ENCODE measurements at regions of chr10 and their contacts with region 1.

Region 1: GRCh38 chr10:70146489-70147258 is at the start of gene TYSND1:
- DNase-seq: peak; percentile 99
- H3K4me3 Mint-ChIP-seq: peak within 1 kb of the TSS; percentile 80
- H3K27ac Mint-ChIP-seq: peak within 1 kb of the TSS; percentile 87
- H3K4me1 Mint-ChIP-seq: peaks cover 14% of the 10 kb centered on the region
- H3K27me3 Mint-ChIP-seq: no peaks in the 10 kb centered on the region
- CTCF ChIP-seq: peak; percentile 65
- total RNA-seq, gene TYSND1: 14.6 and 16.5 TPM in 2 replicates

Region 2: GRCh38 chr10:70093335-70093944 is 53.2 kb before region 1 on chr10:
- CTCF ChIA-PET with region 1: no interaction called
- POLR2A ChIA-PET with region 1: no interaction called
- intact Hi-C with region 1: no loop called
- DNase-seq: no peak
- H3K4me3 Mint-ChIP-seq: no peak overlapping the region
- H3K27ac Mint-ChIP-seq: no peak overlapping the region
- H3K4me1 Mint-ChIP-seq: no peaks in the 10 kb centered on the region
- H3K27me3 Mint-ChIP-seq: no peaks in the 10 kb centered on the region
- CTCF ChIP-seq: no peak

Region 3: DNA sequence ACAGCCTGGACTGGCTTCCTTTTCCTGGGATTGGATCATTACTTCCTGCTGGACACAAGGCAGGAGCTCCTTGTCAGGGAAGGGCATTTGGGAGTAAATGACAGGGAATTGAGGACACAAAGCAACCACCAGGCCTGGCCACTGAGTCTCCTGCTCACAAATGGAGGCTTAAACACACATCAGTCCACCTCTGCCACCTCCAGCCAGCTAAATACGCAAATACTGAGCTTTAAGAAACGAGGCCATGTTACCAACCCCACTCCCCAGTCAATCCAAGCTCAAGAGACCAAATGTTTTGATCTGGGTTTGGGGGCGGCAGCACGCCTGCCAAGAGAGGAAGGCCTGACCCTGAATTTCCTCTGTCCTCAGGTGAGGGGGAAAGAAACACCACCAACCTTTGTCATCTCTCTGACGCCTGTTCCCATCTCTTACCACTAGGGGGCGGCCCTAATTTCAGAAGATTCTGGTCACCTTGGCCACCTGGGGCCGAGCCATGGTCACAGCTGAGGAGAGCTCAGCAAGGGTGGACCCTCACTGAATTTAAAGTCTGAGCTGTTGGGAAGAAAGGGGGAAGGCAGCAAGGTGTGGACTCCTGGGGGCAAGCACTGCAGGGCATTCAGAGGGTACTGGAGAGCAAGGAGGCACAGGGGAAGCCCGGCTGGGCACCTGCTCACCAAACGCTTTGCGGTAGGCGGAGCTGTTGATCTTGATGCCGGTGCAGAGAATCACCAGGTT is 30.6 kb before region 1 on chr10:
- CTCF ChIA-PET with region 1: interaction called, 75 read pairs
- POLR2A ChIA-PET with region 1: interaction called, 31 read pairs
- intact Hi-C with region 1: loop called (anchors 2 kb)
- DNase-seq: peak; percentile 68
- H3K4me3 Mint-ChIP-seq: no peak overlapping the region
- H3K27ac Mint-ChIP-seq: no peak overlapping the region
- H3K4me1 Mint-ChIP-seq: peaks cover 6% of the 10 kb centered on the region
- H3K27me3 Mint-ChIP-seq: no peaks in the 10 kb centered on the region
- CTCF ChIP-seq: peak; percentile 65

Region 4: DNA sequence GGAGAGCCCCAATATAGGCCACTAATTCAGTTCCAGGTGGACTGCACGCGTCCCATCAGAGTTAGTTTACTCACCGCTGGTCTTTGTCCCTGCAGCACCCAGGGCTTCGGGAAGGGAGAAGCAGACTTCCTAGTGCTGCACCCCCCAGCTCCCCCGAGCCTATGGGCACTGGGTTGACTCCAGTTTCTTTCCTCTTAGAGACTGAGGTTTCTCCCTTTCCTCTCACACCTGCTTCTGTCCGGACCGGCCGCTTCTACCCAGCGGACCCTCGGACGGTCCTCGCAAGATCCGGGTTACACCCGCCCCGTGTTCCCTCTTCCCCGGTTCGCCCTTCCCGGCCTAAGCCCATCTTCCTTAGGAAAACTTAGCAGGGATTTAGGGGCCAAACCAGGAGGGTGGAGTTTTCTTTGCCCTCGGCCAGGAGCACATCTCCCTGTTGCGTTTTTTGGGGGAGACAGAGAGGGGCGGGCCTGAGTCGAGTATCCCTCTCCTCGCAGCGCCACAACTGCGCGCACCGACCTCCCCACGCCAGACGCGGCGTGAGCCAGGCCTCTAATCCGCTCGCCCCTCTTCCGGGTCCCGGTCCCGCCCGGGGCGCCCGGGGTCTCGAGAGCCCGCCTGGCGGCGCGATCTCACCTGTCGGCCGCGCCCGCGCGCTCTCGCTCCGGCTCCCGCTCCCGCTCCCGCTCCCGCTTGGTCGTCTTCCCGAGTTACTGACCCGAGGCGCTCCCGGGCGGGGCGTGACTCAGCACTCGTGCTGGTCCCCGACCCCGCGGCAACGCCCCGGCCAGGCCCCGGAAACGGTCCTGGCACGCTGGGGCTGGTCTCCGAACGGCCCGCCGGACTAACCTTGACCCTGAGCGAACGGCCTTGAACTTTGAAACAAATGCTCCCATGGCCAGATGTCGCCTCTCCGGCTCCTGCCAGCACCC is 14.3 kb before region 1 on chr10 and contains the start of gene AIFM2:
- CTCF ChIA-PET with region 1: interaction called, 17 read pairs
- POLR2A ChIA-PET with region 1: interaction called, 33 read pairs
- intact Hi-C with region 1: no loop called
- DNase-seq: peak; percentile 81
- H3K4me3 Mint-ChIP-seq: peak within 1 kb of the TSS; percentile 81
- H3K27ac Mint-ChIP-seq: peak within 1 kb of the TSS; percentile 91
- H3K4me1 Mint-ChIP-seq: peaks cover 26% of the 10 kb centered on the region
- H3K27me3 Mint-ChIP-seq: no peaks in the 10 kb centered on the region
- CTCF ChIP-seq: no peak
- total RNA-seq, gene AIFM2: 19.2 and 21.9 TPM in 2 replicates

Region 5: DNA sequence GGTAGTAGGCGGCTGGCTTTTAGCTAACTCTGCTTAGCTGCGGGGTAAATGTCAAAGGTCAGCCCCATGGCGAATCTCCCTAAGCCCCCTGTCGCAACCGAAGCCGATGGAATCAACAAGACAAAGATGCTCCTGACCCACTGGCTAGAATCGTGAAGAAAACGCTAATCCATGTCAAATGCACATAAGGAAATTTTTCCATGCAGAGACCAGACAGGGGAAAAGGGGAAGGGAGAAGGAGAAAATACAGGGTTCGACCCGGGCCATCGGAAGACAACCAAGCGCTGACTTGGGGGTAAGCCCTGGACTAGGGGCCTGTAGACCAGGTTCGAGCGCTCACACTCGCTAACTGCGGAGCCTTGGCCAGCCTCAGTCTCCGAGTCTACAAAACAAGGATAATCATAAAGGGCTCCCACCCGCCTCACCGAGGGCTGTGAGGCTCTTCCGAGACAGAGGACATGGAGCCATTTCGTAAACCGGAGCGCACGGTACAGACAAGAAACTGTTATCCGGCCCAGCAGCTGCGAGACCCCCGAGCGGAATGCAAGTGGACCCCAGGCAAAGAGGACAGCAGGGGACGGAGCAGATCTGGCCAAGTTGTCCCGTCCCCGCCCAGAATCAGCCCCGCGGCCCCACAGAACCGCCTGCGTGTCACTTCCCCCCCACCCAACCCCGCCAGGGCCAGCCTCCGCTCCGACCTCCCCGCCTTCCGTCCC is 23.1 kb after region 1 on chr10:
- CTCF ChIA-PET with region 1: interaction called, 14 read pairs
- POLR2A ChIA-PET with region 1: interaction called, 59 read pairs
- intact Hi-C with region 1: no loop called
- DNase-seq: no peak
- H3K4me3 Mint-ChIP-seq: peak overlapping the region; percentile 90
- H3K27ac Mint-ChIP-seq: peak overlapping the region; percentile 98
- H3K4me1 Mint-ChIP-seq: peaks cover 30% of the 10 kb centered on the region
- H3K27me3 Mint-ChIP-seq: no peaks in the 10 kb centered on the region
- CTCF ChIP-seq: no peak

Region 6: DNA sequence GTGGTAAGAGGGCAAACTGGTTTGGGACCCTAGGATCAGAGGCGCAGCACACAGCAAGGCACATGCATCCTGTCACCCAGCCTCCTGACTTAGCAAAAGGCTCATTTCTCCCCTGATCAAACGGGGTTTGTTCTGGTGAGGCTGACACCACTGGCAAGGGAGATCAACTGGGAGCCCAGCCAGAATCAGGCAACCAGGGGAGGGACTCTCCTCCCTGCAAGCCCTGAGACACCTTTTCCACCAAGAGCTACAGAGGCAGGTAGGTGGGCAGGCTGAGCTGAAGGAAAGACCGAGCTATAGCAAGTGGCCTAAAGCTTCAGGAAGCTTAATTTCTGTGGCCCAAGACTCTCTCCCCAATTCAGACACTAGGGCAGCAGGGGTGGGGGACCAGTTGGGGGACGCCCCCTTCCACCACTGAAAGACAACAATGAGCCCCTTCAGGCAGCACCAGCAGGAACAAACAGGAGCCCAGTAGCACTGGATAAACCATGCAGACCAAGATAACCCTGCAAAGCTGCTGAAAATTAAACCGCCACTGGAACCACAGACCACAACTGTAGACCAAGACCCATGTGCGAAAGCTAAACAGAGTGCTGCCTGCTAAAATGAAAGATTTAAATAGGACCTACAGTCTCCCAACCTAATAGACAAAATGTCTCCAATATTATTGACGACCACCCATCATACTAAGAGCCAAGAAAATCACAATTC is 50.7 kb after region 1 on chr10:
- CTCF ChIA-PET with region 1: interaction called, 17 read pairs
- POLR2A ChIA-PET with region 1: interaction called, 79 read pairs
- intact Hi-C with region 1: loop called (anchors 1 kb)
- DNase-seq: no peak
- H3K4me3 Mint-ChIP-seq: no peak overlapping the region
- H3K27ac Mint-ChIP-seq: no peak overlapping the region
- H3K4me1 Mint-ChIP-seq: peaks cover 17% of the 10 kb centered on the region
- H3K27me3 Mint-ChIP-seq: no peaks in the 10 kb centered on the region
- CTCF ChIP-seq: no peak

Region 7: DNA sequence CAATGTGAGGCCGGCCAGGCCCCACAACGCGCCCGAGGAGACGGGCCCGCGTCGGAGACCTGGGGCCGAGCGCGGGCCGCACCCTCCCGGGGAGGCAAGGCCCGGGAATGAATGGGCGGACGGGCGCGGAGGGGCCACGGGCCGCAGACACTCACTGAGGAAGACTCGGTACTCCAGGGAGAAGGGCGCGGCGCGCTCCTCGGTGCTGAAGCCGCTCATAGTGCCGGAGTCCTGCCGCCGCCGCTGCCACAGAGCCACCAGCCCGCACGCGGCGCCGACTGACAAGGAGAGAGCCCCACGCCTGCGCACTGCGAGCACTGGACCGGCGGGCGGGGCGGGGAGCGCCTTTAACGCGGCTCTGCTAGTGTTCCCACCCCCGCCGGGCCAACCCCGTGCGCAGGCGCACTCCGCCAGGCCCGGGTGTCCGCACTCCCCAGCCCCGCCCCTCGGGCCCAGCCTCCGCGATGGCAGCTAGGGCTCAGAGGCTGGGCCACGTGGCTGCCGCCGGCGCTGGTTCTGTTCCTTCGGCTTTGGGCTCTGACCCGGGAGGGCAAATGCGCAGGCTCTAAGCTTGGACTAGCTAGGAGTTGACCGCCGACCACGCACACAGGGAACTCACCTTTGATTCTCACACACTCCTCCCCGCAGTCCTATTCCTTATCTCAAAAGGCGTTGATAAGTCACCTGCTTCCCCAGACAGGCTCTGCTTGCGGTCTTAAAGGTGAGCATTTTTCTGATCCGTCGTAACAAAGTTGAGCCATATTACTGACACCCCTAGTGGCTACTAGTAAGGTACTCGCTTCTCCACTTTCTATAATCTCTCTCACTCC is 86.7 kb after region 1 on chr10 and contains the start of gene PPA1:
- CTCF ChIA-PET with region 1: interaction called, 8 read pairs
- POLR2A ChIA-PET with region 1: interaction called, 14 read pairs
- intact Hi-C with region 1: no loop called
- DNase-seq: peak; percentile 96
- H3K4me3 Mint-ChIP-seq: peak within 1 kb of the TSS; percentile 90
- H3K27ac Mint-ChIP-seq: peak within 1 kb of the TSS; percentile 97
- H3K4me1 Mint-ChIP-seq: peaks cover 32% of the 10 kb centered on the region
- H3K27me3 Mint-ChIP-seq: no peaks in the 10 kb centered on the region
- CTCF ChIP-seq: no peak
- total RNA-seq, gene PPA1: 221 and 293 TPM in 2 replicates

Region 8: DNA sequence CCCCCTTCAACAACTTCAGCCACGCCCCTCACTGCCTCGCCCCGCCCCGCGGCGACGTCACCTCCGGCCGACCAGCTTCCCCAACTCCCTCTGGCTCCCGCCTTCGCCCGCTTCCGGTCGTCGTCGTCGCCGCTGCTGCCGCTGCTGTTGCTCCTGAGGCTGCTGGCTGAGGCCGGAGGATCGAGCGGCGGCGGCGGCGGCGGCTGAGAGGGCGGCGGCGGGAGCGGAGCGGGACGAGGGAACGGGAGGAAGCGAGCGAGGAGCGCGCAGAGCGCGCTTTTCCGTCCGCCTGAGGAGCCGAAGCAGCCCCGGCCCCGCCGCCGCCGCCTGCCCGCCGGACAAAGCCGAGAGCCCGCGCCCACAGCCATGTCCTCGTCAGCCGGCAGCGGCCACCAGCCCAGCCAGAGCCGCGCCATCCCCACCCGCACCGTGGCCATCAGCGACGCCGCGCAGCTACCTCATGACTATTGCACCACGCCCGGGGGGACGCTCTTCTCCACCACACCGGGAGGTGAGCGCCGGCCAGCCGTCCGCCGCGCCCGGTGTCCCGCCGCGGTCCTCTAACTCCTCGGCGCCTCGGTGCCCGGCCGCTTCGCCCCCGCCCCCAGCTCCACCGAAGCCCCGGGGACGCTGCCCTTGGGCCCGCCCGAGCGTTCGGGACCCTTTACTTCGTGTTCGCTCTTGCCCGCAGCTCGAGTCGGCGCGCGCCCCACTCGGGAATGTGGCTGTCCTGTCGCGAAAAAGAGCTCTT is 257.5 kb after region 1 on chr10 and contains the start of gene EIF4EBP2:
- CTCF ChIA-PET with region 1: no interaction called
- POLR2A ChIA-PET with region 1: interaction called, 39 read pairs
- intact Hi-C with region 1: no loop called
- DNase-seq: peak; percentile 96
- H3K4me3 Mint-ChIP-seq: peak within 1 kb of the TSS; percentile 84
- H3K27ac Mint-ChIP-seq: peak within 1 kb of the TSS; percentile 89
- H3K4me1 Mint-ChIP-seq: peaks cover 20% of the 10 kb centered on the region
- H3K27me3 Mint-ChIP-seq: no peaks in the 10 kb centered on the region
- CTCF ChIP-seq: no peak
- total RNA-seq, gene EIF4EBP2: 21.2 and 26.1 TPM in 2 replicates

Region 9: DNA sequence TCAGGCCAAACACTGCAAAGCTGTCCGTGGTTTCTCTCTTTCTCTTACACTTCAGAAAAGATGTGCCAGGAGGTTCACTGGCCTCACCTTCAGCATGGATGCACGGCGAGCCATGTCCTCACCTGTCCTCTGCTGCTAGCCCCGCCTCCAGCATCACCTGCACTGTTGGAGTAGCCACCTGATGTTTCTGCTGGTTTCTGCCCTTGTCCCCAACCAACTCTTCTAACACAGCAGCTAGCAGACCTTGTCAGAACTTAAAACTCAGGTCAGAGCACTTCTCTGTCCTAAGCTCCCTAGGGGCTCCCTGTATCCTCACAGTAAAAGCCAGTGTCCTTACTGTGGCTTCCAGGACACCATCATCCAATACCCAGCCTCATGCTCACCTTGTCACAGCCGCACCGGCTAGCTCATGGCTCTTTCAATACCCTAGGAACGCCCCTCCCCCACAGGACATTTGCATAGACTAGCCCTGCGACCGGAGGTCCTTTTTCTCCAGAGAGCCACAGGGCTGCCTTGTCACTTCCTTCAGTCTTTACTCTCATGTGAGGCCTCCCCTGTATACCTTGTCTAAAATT is 347.1 kb after region 1 on chr10:
- CTCF ChIA-PET with region 1: no interaction called
- POLR2A ChIA-PET with region 1: no interaction called
- intact Hi-C with region 1: no loop called
- DNase-seq: no peak
- H3K4me3 Mint-ChIP-seq: no peak overlapping the region
- H3K27ac Mint-ChIP-seq: no peak overlapping the region
- H3K4me1 Mint-ChIP-seq: no peaks in the 10 kb centered on the region
- H3K27me3 Mint-ChIP-seq: peaks cover 30% of the 10 kb centered on the region
- CTCF ChIP-seq: no peak